ENCODE measurements at regions of chr5 and their contacts with region 1.

Region 1: GRCh38 chr5:9799606-9800005 is 169.5 kb upstream of the TAS2R1 start:
- DNase-seq: no peak
- ATAC-seq: no peak
- H3K4me3 ChIP-seq: no peak overlapping the region
- H3K27ac ChIP-seq: no peak overlapping the region
- H3K4me1 ChIP-seq: no peaks in the 10 kb centered on the region
- H3K27me3 ChIP-seq: no peaks in the 10 kb centered on the region
- CTCF ChIP-seq: no peak

Region 2: GRCh38 chr5:8429778-8430758 is 1369.5 kb before region 1 on chr5:
- intact Hi-C with region 1: loop called in 1 of 10 experiments (anchors 10 kb)
- DNase-seq: no peak
- ATAC-seq: peak in 1 of 8 donors; percentile 55
- H3K4me3 ChIP-seq: no peak overlapping the region
- H3K27ac ChIP-seq: no peak overlapping the region
- H3K4me1 ChIP-seq: no peaks in the 10 kb centered on the region
- H3K27me3 ChIP-seq: no peaks in the 10 kb centered on the region
- CTCF ChIP-seq: no peak

Region 3: GRCh38 chr5:9888501-9888901 is 88.9 kb after region 1 on chr5:
- intact Hi-C with region 1: no loop called
- DNase-seq: no peak
- ATAC-seq: no peak
- H3K4me3 ChIP-seq: no peak overlapping the region
- H3K27ac ChIP-seq: no peak overlapping the region
- H3K4me1 ChIP-seq: no peaks in the 10 kb centered on the region
- H3K27me3 ChIP-seq: no peaks in the 10 kb centered on the region
- CTCF ChIP-seq: no peak

Region 4: GRCh38 chr5:10220243-10220642 is 420.6 kb after region 1 on chr5:
- intact Hi-C with region 1: no loop called
- DNase-seq: no peak
- ATAC-seq: no peak
- H3K4me3 ChIP-seq: no peak overlapping the region
- H3K27ac ChIP-seq: no peak overlapping the region
- H3K4me1 ChIP-seq: no peaks in the 10 kb centered on the region
- H3K27me3 ChIP-seq: no peaks in the 10 kb centered on the region
- CTCF ChIP-seq: peak in 2 of 9 donors; percentile 12 to 24